ENCODE measurements at regions of chr16 and their contacts with region 1.

Region 1: DNA sequence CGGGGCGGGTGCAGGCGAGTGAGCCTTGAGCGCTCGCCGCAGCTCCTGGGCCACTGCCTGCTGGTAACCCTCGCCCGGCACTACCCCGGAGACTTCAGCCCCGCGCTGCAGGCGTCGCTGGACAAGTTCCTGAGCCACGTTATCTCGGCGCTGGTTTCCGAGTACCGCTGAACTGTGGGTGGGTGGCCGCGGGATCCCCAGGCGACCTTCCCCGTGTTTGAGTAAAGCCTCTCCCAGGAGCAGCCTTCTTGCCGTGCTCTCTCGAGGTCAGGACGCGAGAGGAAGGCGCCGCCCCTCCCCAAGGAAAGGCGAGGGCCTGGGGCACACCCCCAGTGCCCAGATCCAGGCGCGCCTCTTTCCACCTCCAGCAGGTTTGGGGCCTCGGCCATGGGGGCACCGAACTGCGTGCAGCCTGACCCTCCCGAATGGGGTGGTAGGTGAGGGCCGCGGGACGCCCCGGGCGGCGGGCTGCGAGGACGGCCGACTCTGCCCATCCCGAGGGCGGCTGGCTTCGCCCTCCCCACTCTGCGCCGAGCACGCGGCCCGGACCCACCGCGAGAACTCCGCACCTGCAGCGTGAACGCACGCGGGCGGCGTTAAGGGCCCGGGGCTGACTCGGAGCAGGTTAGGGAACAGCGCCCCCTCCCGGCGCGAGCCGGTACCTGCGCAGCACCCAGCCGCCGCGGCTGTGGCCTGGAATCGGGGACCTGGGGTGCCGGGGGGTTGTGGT is 844 bp downstream of the HBQ1 start:
- DNase-seq: peak; percentile 66 to 73
- H3K4me3 ChIP-seq: no peak overlapping the region
- H3K27ac ChIP-seq: no peak overlapping the region
- H3K4me1 ChIP-seq: peaks cover 10 to 18% of the 10 kb centered on the region in 2 donors
- H3K27me3 ChIP-seq: peaks cover 23% of the 10 kb centered on the region
- CTCF ChIP-seq: peak; percentile 64 to 96 (median 86)
- POLR2A ChIP-seq: no peak

Region 2: DNA sequence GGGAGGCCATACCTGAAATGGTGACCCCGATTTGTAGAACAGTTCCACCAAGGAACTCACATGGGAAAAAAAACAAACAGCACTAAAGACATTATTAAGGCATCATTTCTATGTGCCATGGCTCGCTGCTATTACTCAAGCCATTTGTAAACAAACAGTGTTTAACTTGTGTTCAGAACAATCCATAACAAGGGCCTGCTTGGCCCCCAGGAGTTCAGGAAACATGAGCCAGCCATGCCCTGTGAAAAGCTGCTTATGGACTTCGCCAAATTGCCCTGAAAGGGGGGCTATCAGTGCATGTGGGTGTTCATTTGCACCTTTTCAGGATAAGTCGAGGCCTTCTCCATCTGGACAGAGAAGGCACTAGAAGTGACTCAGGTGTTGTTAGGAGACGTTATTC is 135.6 kb before region 1 on chr16:
- intact Hi-C with region 1: no loop called
- DNase-seq: no peak
- H3K4me3 ChIP-seq: no peak overlapping the region
- H3K27ac ChIP-seq: no peak overlapping the region
- H3K4me1 ChIP-seq: no peaks in the 10 kb centered on the region
- H3K27me3 ChIP-seq: no peaks in the 10 kb centered on the region
- CTCF ChIP-seq: no peak
- POLR2A ChIP-seq: no peak

Region 3: DNA sequence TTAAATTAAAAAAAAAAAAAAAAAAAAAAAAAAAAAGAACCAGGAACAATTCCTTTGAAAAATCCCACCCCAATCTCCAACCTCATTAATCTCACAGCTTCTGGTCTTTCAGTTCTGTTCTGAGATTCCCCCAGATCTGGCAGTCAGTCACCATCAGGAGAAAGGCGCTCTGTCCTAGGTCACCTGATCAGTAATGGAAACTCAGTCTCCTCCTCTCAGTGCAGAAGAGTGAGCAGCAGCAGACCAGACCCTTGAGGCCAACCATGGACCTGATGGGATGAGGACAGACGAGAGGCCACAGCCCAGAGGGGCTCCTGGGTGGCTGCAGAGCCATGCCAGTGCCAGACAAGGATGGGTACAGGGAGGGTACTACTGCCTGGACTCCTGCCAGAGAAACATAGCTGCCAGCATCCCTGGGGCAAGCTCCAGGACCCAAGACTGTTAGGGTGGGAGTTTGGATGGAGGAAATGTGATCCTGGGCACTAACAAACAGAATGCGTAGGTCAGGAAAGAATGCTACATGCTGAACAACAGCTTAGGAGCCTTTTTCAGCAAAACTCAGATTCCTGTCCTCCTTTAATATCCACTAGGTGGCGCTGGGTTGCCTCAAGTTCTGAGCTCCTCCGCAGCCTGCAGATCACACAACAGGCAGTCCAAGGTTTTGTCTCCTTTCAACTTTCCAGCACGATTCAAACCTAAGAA is 74.3 kb before region 1 on chr16:
- intact Hi-C with region 1: loop called (anchors 5 kb)
- DNase-seq: peak; percentile 56 to 67
- H3K4me3 ChIP-seq: no peak overlapping the region
- H3K27ac ChIP-seq: no peak overlapping the region
- H3K4me1 ChIP-seq: peaks cover 0 to 2% of the 10 kb centered on the region in 2 donors
- H3K27me3 ChIP-seq: no peaks in the 10 kb centered on the region
- CTCF ChIP-seq: peak; percentile 56 to 80 (median 70)
- POLR2A ChIP-seq: no peak

Region 4: DNA sequence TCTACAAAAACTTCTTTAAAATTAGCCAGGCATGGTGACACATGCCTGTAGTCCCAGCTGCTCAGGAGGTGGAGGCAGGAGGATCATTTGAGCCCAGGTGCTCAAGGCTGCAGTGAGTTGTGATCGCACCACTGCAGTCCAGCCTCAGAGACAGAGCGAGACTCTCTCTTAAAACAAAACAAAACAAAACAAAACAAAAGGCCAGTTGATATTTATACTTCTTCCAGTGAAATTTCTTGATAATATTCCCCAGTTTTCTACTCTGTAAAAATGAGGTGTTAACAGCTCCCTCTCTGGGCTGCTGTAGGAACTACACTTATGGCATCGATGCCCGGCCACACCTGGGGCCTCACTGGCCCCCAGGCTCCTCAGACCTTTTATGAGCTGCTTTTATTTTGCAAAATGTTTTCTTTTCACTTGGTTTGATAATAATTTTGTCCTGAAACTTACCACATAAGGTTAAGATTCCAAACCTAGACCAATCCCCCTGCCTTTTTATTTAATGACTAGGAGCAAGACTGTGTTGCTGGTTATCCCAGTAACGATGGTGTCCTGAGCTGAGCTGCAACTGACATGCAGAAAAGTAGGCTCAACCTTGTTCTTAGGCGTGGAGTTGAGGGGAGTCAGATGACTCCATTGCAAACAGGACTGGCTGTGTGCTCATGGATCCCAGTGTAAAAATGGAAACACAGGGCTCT is 1542.5 kb after region 1 on chr16:
- intact Hi-C with region 1: no loop called
- DNase-seq: peak; percentile 49 to 62
- H3K4me3 ChIP-seq: no peak overlapping the region
- H3K27ac ChIP-seq: peak overlapping the region in 2 of 3 donors; percentile 32 to 39
- H3K4me1 ChIP-seq: peaks cover 14 to 27% of the 10 kb centered on the region in 2 donors
- H3K27me3 ChIP-seq: no peaks in the 10 kb centered on the region
- CTCF ChIP-seq: peak; percentile 65 to 88 (median 70)
- POLR2A ChIP-seq: no peak